T-cell (primary cell): ENCODE measurements at regions of chr4 and their contacts with region 1.

Region 1: GRCh38 chr4:139560406-139561104 is 4.5 kb upstream of the SETD7 start:
- DNase-seq: peak in 3 of 35 experiments; percentile 19 to 66 (median 30)
- ATAC-seq: peak in 3 of 4 experiments; percentile 14 to 49 (median 28)
- H3K4me3 ChIP-seq: no peak overlapping the region
- H3K4me3 Mint-ChIP-seq: peak overlapping the region in 2 of 3 donors; percentile 51 to 71
- H3K27ac ChIP-seq: peak overlapping the region; percentile 81
- H3K27ac Mint-ChIP-seq: peak overlapping the region; percentile 91 to 97
- H3K4me1 ChIP-seq: peaks cover 10 to 36% of the 10 kb centered on the region in 2 experiments
- H3K4me1 Mint-ChIP-seq: peaks cover 28 to 44% (median 32%) of the 10 kb centered on the region in 3 donors
- H3K27me3 ChIP-seq: peaks cover 0 to 15% of the 10 kb centered on the region in 2 experiments
- H3K27me3 Mint-ChIP-seq: peaks cover 0 to 2% of the 10 kb centered on the region in 2 donors

Region 2: DNA sequence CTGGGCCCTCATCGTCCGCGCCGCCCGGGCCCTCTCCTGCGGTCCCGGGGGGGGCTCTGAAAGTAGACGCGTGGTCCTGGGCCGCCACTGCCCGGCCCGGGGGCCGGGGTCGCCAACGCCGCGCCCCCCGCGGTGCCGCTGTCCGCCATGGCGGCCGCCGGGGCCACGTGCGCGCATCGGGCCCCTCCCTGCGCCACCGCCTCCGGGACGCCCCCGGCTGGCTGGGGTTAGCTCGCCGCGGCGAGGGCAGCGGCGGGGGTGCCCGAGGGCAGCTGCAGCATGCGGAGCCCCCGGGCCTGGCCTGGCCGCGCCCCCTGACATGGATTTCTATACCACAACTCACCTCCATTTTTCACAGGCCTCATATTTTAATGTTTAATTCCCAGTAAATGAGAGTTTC is 445.3 kb before region 1 on chr4:
- CTCF ChIA-PET with region 1: no interaction called
- POLR2A ChIA-PET with region 1: interaction called in 1 of 2 experiments, 11 read pairs
- DNase-seq: no peak
- ATAC-seq: no peak
- H3K4me3 ChIP-seq: no peak overlapping the region
- H3K4me3 Mint-ChIP-seq: no peak overlapping the region
- H3K27ac ChIP-seq: no peak overlapping the region
- H3K27ac Mint-ChIP-seq: no peak overlapping the region
- H3K4me1 ChIP-seq: no peaks in the 10 kb centered on the region
- H3K4me1 Mint-ChIP-seq: no peaks in the 10 kb centered on the region
- H3K27me3 ChIP-seq: no peaks in the 10 kb centered on the region
- H3K27me3 Mint-ChIP-seq: no peaks in the 10 kb centered on the region

Region 3: GRCh38 chr4:140315970-140316369 is 755.4 kb after region 1 on chr4:
- CTCF ChIA-PET with region 1: no interaction called
- POLR2A ChIA-PET with region 1: no interaction called
- DNase-seq: no peak
- ATAC-seq: no peak
- H3K4me3 ChIP-seq: no peak overlapping the region
- H3K4me3 Mint-ChIP-seq: no peak overlapping the region
- H3K27ac ChIP-seq: no peak overlapping the region
- H3K27ac Mint-ChIP-seq: no peak overlapping the region
- H3K4me1 ChIP-seq: no peaks in the 10 kb centered on the region
- H3K4me1 Mint-ChIP-seq: no peaks in the 10 kb centered on the region
- H3K27me3 ChIP-seq: no peaks in the 10 kb centered on the region
- H3K27me3 Mint-ChIP-seq: peaks cover 0 to 8% of the 10 kb centered on the region in 2 donors